ENCODE measurements at regions of chr13 and their contacts with region 1.

Region 1: DNA sequence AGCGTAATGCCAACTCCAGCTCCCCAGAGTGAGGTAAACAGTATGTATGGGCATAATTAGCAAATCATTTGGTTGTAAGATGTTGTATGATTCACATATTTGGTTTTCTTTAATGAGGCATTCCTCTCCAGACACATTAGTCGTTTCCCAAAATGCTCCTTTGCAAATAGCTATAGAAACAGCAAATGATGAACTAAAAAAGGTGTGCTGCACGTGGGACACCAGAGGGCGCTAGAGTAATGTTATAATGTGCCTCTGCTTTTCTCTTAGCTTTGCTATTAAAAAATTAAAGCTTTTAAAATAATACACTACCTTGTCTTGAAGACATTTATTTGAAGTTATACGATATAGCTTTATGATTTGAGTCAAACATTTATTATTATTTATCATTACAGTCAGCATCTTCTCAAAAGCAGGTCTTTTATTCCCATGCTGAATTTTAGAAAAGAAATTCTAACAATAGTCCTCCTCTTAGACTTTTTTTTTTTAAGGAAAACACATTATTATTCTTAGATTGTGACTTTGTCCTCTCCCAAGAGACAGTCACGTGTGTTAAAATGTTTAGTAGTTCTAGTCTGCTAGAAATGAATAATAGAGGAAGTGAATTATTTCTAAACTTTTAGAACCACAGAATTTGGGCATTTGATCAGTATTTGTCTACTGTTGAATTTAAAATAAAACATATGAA is 121.6 kb upstream of the FRY start:
- DNase-seq: peak; percentile 65
- H3K4me3 ChIP-seq: no peak overlapping the region
- H3K27ac ChIP-seq: no peak overlapping the region
- H3K4me1 ChIP-seq: no peaks in the 10 kb centered on the region
- H3K27me3 ChIP-seq: no peaks in the 10 kb centered on the region
- CTCF ChIP-seq: peak; percentile 93

Region 2: DNA sequence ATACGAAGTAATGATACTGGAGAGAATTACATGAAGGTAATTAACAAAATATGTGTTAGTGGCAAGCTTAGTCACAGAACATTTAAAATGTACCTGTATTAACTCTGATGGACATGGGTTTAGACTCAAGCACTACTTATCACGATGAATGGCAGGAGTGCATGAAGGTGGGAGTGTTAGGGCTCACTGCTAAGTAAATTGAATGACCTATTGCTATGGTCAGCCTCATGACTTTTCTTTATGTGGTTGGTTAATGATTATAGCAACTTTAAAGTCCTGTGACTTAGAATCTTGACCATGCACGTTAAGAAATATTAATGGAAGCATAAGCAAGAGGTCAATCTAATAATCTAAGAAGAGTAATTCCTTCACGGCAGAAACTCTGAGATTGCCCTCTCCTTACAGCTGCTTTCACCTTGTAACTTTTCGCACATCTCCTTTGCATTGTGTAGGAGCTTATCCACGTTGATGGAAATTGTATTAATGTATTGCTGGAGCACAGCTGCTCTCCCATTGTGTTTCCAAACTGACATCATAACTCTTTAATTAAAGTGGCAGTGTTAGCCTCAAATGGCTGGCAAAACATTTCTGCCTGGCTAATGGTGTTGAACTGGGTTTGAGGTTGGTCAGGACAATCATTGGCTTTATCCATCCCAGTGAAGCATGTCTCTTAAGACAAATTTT is 56.2 kb before region 1 on chr13:
- CTCF ChIA-PET with region 1: no interaction called
- POLR2A ChIA-PET with region 1: interaction called, 19 read pairs
- intact Hi-C with region 1: no loop called
- DNase-seq: no peak
- H3K4me3 ChIP-seq: no peak overlapping the region
- H3K27ac ChIP-seq: no peak overlapping the region
- H3K4me1 ChIP-seq: no peaks in the 10 kb centered on the region
- H3K27me3 ChIP-seq: peaks cover 9% of the 10 kb centered on the region
- CTCF ChIP-seq: no peak

Region 3: DNA sequence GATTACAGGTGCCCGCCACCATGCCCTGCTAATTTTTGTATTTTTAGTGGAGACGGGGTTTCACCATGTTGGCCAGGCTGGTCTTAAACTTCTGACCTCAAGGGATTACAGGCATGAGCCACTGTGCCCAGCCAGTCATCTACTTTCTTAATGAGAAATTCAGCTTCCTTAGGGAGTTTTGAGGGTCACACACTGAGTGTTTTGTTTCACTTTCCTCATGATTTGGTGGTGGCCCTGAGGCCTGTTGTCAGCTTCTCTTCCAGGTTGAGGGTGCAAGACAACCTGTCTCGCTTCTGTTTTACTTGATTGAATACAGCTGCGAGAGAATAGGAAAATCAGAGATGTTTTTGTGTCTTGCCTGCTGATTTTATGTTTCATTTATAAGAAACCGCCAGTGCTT is 131.4 kb after region 1 on chr13:
- CTCF ChIA-PET with region 1: no interaction called
- POLR2A ChIA-PET with region 1: no interaction called
- intact Hi-C with region 1: no loop called
- DNase-seq: no peak
- H3K4me3 ChIP-seq: no peak overlapping the region
- H3K27ac ChIP-seq: no peak overlapping the region
- H3K4me1 ChIP-seq: peaks cover under 1% of the 10 kb centered on the region
- H3K27me3 ChIP-seq: no peaks in the 10 kb centered on the region
- CTCF ChIP-seq: no peak

Measured in A673 (cell line).